Heart left ventricle (tissue), 16 donors: ENCODE measurements at regions of chr7 and their contacts with region 1.

Region 1: GRCh38 chr7:140479062-140479738 is at the start of gene MKRN1:
- DNase-seq: peak; percentile 93 to 97 (median 96)
- ATAC-seq: peak; percentile 98 to 99 (median 99)
- H3K4me3 ChIP-seq: peak within 1 kb of the TSS; percentile 68 to 100 (median 94)
- H3K27ac ChIP-seq: peak within 1 kb of the TSS; percentile 73 to 91 (median 84)
- H3K4me1 ChIP-seq: peaks cover 0 to 33% (median 22%) of the 10 kb centered on the region in 12 donors
- H3K27me3 ChIP-seq: no peaks in the 10 kb centered on the region
- CTCF ChIP-seq: no peak
- POLR2A ChIP-seq: peak in 1 of 2 donors; percentile 84
- total RNA-seq, gene MKRN1: 52.3 to 109 (median 100) TPM

Region 2: DNA sequence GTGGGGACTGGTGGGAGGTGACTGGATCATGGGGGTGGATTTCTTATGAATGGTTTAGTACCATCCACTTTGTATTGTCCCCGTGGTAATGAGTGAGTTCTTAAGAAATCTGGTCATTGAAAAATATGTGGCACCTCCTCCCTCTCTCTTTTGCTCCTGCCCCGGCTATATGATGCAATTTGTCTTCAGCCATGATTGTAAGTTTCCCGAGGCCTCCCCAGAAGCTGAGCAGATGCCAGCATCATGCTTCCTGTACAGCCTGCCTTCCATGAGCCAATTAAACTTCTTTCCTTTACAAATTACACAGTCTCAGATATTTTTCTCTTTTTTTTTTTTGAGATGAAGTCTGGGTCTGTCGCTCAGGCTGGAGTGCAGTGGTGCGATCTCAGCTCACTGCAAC is 299.9 kb before region 1 on chr7:
- intact Hi-C with region 1: no loop called
- DNase-seq: no peak
- ATAC-seq: no peak
- H3K4me3 ChIP-seq: no peak overlapping the region
- H3K27ac ChIP-seq: no peak overlapping the region
- H3K4me1 ChIP-seq: peaks cover 0 to 17% (median 12%) of the 10 kb centered on the region in 12 donors
- H3K27me3 ChIP-seq: peaks cover 0 to 18% (median 0%) of the 10 kb centered on the region in 9 donors
- CTCF ChIP-seq: no peak
- POLR2A ChIP-seq: no peak

Region 3: GRCh38 chr7:140653319-140654108 is 174.3 kb after region 1 on chr7:
- intact Hi-C with region 1: loop called (anchors 1 to 10 kb)
- DNase-seq: peak in 4 of 5 donors; percentile 64 to 71 (median 64)
- ATAC-seq: peak; percentile 52 to 74 (median 68)
- H3K4me3 ChIP-seq: no peak overlapping the region
- H3K27ac ChIP-seq: no peak overlapping the region
- H3K4me1 ChIP-seq: peaks cover 0 to 42% (median 19%) of the 10 kb centered on the region in 12 donors
- H3K27me3 ChIP-seq: no peaks in the 10 kb centered on the region
- CTCF ChIP-seq: peak; percentile 69 to 97 (median 91)
- POLR2A ChIP-seq: no peak